ENCODE measurements at regions of chr18 and their contacts with region 1.

Region 1: GRCh38 chr18:12934454-12935071 is 13.2 kb upstream of the SEH1L start:
- DNase-seq: peak; percentile 33
- H3K4me3 ChIP-seq: no peak overlapping the region
- H3K27me3 ChIP-seq: no peaks in the 10 kb centered on the region
- CTCF ChIP-seq: peak; percentile 90

Region 2: GRCh38 chr18:12711446-12711845 is 223.1 kb before region 1 on chr18:
- CTCF ChIA-PET with region 1: interaction called, 10 read pairs
- POLR2A ChIA-PET with region 1: no interaction called
- DNase-seq: no peak
- H3K4me3 ChIP-seq: no peak overlapping the region
- H3K27me3 ChIP-seq: no peaks in the 10 kb centered on the region
- CTCF ChIP-seq: no peak

Region 3: GRCh38 chr18:12744103-12744502 is 190.5 kb before region 1 on chr18:
- CTCF ChIA-PET with region 1: interaction called, 88 read pairs
- POLR2A ChIA-PET with region 1: no interaction called
- DNase-seq: no peak
- H3K4me3 ChIP-seq: no peak overlapping the region
- H3K27me3 ChIP-seq: no peaks in the 10 kb centered on the region
- CTCF ChIP-seq: peak; percentile 63

Region 4: DNA sequence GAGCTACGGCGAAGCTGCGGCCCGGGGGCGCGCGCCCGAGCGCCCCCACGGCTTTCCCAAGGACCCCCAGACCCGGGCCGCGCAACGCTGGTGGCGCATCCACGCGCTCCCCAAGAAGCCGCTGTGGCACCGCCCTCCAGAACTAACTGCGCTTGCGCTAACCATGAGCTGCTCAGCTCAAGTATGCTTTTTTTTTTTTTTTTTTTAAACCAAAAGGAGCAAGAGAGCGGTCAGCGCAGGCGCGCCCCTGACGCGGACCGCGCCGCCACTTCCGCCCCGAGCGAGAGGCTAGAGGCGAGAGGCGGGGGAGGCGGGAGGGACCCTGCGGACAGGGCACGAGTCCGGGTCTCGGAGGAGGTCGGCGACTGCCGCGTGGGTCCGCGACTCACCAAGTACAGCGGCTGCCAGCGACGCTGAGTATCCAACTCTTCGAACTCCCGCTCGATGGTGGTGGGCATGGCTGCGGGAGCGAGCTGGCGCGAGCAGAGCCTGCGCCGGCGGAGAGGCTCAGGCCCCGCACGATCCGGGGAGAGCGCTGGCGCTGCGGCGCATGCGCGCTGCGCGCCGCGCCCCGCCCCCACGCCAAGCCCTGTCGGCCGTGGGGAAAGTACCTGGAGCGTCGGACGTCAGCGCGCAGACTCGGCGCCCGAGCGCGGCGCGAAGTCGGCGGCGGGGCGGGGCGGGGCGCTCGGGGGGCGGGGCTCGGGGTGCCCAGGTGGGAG is 50.7 kb before region 1 on chr18 and contains the start of gene PTPN2:
- CTCF ChIA-PET with region 1: interaction called, 10 read pairs
- POLR2A ChIA-PET with region 1: no interaction called
- DNase-seq: peak; percentile 72
- H3K4me3 ChIP-seq: peak within 1 kb of the TSS; percentile 85
- H3K27me3 ChIP-seq: no peaks in the 10 kb centered on the region
- CTCF ChIP-seq: no peak
- polyA plus RNA-seq, gene PTPN2: 14.5 and 19.0 TPM in 2 replicates

Region 5: DNA sequence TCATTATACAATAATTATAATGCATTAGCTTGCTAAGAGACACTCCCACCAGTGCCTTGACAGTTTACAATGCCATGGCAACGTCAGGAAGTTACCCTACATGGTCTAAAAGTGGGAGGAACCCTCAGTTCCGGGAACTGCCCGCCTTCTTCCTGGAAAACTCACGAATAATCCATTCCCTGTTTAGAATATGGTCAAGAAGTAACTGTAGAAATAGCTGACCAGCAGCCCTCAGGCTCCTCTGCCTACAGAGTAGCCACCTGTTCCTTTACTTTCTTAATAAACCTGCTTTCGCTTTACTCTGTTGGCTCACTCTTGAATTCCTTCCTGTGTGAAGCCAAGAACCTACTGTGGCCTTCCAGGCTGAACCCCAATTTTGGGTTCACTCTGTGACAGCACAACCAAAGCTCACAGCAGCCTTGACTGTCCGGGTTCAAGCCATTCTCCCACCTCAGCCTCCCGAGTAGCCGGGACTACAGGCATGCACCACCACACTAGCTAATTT is 30.5 kb before region 1 on chr18:
- CTCF ChIA-PET with region 1: interaction called, 11 read pairs
- POLR2A ChIA-PET with region 1: no interaction called
- DNase-seq: no peak
- H3K4me3 ChIP-seq: no peak overlapping the region
- H3K27me3 ChIP-seq: 0 out of 2 replicates have a peak, but pooled peaks cover 1% of the 10 kb centered on the region
- CTCF ChIP-seq: no peak

Region 6: DNA sequence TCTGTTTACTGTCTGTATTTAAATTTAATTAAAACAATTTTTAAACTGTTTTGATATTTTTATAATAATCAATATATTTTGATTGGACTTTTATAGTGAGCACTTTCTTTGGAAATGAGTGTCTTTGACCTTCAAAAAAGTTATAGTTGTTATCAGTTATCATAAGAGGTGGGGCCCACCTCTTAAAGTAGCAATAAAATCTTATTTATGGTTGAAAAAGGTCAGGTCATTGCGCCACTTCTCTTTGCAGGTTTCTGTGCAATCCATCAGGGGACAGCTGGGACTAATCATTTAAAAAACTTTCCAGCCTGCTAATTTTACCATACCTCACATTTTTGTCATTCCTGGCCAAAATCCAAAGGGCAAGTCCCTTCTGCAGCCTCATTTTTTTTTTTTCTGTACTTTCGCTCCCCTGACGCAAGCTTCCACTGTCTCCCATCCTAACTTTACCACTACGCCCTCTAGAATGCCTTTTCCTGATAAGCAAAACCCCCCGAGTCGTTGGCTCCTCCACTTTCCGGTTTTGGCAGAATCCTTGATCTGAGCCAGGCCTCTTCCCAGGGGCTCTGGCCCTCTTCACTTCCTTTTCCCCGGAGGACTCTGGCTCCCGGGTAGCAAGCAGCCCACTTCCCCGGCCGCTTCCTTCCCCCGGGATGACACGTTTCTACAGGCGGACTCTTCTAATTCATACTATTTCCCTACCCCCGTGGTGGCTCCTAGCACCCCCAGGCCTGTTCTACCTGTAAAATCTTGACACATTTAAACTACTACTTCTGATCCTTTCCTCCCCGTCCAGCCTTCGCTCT is 12.2 kb after region 1 on chr18:
- CTCF ChIA-PET with region 1: interaction called, 40 read pairs
- POLR2A ChIA-PET with region 1: no interaction called
- DNase-seq: peak; percentile 84
- H3K4me3 ChIP-seq: peak overlapping the region; percentile 85
- H3K27me3 ChIP-seq: no peaks in the 10 kb centered on the region
- CTCF ChIP-seq: peak; percentile 37; the same call in 1 of the 2 replicates

Region 7: DNA sequence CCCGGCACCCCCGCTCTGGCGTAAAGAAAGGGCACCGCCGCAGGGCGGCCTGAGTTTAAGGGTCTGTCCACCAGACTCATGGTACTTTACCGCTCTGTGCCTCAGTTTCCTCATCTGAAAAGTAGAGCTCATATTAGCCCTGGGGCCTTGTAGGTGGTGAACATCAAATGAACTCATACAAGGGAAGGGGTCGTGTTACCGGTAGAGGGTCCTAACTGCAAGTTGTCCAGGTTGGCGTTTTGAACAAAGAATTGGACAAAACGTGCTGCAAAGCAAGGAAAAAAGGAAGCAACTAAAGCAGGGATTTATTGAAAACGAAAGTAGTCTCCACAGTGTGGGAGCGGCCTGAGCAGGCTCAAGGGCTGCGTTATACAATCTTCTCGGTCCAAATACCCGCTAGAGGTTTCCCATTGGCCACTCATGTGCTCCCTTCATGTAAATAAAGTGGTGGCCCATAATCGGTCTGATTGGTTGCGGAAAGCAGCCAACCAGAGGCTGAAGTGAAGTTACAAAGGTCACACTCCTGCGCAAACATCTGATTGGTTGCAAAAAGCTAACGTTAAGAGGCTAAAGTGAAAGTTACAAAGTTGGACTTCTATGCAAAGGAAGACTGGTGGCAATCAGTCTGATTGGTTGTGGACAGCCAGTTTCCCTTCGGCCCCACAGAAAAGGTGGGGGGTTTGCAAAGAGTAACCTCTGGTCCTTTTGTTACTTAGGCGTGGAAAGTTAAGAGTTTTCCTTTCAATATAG is 203.3 kb after region 1 on chr18:
- CTCF ChIA-PET with region 1: no interaction called
- POLR2A ChIA-PET with region 1: no interaction called
- DNase-seq: no peak
- H3K4me3 ChIP-seq: peak overlapping the region; percentile 54
- H3K27me3 ChIP-seq: no peaks in the 10 kb centered on the region
- CTCF ChIP-seq: no peak

Region 8: DNA sequence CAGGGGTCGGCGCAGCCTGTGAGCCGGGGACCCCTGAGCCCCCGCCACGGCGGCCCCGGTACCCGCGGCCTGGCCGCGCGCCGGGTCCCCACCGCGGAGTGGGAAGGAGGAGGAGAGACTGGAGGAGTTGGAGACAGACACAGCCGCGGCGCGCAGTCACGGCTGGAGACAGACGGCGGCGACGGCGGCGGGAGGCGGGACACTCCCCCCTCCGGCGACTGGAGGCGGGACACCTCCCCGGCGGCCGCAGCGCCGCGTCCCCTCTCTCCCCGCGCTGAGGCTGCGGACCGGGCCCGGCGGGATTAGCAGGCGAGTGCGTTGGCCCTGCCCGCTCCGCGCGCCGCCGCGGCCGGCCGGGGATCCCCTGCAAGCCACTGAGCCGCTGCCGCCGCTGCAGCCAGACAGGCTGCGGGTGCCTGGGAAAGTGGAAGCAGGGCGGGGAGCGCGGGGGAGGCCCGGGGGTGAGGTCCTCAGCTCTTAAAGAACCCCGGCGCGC is 283.0 kb after region 1 on chr18:
- CTCF ChIA-PET with region 1: no interaction called
- POLR2A ChIA-PET with region 1: no interaction called
- DNase-seq: no peak
- H3K4me3 ChIP-seq: peak overlapping the region; percentile 23
- H3K27me3 ChIP-seq: peaks cover 22% of the 10 kb centered on the region
- CTCF ChIP-seq: no peak

Region 9: DNA sequence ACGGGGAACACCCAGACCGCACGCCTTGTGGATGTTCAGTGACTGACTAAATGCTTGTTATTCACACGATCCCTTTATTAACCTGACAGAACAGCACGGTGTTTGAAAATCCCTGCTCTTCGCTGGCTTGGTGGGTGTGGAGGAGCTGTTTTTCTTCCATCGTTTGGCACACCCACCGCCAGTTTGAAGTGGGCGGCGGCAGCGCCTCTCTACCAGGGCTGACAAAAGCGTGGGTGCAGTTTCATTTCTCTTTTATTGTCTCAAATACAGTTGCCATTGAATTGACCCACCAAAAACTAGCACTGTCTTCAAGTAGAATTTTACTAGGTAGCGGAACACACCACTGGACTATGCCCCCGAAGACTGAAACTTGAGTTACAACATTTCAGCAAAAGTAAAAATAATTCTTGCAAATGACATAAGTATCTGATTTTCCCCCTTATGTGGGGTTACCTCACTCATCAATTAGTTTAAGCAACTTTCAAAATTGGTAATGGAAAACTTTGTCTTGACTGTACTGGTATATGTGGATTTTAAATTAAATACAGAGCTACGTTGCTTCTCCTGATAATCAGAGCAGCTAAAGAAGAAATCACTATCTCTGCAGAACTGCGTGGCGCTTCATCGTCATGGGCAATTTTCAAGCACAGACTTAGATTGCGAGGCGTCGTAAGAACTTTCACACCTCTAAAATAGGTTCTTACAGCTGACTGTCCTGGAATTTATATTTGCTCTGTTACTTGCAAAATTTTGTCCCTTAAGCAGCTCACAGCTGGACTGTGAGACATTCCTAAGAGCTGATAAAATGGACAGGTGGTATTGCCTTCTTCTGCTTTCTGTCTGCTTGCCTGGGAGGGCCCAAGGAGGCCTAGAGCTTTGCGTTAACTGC is 344.9 kb after region 1 on chr18:
- CTCF ChIA-PET with region 1: no interaction called
- POLR2A ChIA-PET with region 1: no interaction called
- DNase-seq: no peak
- H3K4me3 ChIP-seq: no peak overlapping the region
- H3K27me3 ChIP-seq: no peaks in the 10 kb centered on the region
- CTCF ChIP-seq: no peak